Motor neuron (in vitro differentiated cells): ENCODE measurements at regions of chr3 and their contacts with region 1.

Region 1: DNA sequence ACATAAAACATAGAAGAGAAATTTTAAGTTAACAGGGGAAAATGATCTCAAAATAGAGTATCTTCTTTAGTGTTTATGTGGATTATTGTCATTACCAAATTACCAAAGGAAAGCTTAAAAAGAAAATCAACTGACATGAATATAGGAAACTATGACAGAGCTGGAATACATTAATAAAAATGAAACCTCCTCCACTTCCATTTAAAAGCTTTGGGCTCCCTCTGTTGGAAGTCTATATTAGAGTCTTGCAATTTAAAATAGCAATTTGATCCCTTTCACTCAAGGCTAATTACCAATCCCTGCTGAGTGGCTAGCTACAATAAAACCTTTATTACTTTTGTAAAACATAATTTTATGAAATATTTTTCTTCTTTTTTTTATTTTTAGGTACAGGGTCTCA is 61.4 kb upstream of the IMPG2 start:
- ATAC-seq: peak in 5 of 8 experiments; percentile 22 to 81 (median 56)
- H3K4me3 ChIP-seq: no peak overlapping the region
- H3K27ac ChIP-seq: no peak overlapping the region
- H3K4me1 ChIP-seq: no peaks in the 10 kb centered on the region

Region 2: DNA sequence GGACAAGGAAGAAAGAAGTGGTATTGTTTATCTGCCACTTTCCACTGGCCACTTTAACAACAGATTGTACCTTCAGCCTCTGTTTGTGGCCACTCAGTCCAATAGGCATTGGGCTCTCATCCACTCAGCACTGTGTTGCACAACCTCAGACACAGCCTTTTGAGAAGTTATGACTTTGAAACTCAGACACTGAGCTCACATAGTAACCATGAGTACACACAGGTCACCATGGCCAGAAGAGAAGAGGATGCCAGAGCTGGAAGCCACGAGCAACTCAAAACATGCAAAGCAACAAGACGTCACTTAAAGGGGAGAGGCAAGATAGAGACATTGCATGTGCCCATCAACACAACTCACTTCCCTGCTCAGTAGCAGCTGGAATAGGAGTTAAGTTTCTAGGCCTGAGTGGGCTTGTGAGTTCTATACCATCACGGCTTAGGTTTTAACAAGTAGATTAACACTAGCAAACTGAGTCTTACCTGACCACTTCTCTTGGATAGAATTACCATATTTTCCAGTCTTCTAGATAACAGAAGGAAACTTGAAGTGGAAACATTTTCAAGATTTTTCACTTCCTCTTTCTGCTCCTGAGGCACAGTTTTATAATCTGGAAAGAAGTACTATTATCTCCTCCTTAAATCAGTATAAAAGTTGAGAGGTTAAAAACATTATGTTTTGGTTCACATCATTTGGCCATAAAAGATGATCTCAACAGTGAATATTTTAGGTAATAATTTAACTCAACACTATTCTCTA is 164.9 kb before region 1 on chr3:
- in situ Hi-C with region 1: loop called in 1 of 9 experiments (anchors 25 kb)
- ATAC-seq: peak in 5 of 8 experiments; percentile 65 to 99 (median 73)
- H3K4me3 ChIP-seq: no peak overlapping the region
- H3K27ac ChIP-seq: no peak overlapping the region
- H3K4me1 ChIP-seq: no peaks in the 10 kb centered on the region